ENCODE measurements at regions of chr1 and their contacts with region 1.

Region 1: GRCh38 chr1:39061951-39062350 is 35.8 kb downstream of the NDUFS5 start:
- DNase-seq: no peak
- H3K4me3 ChIP-seq: no peak overlapping the region
- H3K27ac ChIP-seq: no peak overlapping the region
- H3K4me1 ChIP-seq: no peaks in the 10 kb centered on the region
- H3K27me3 ChIP-seq: no peaks in the 10 kb centered on the region
- CTCF ChIP-seq: no peak

Region 2: GRCh38 chr1:38929476-38929875 is 132.5 kb before region 1 on chr1:
- CTCF ChIA-PET with region 1: no interaction called
- POLR2A ChIA-PET with region 1: interaction called, 12 read pairs
- intact Hi-C with region 1: no loop called
- DNase-seq: no peak
- H3K4me3 ChIP-seq: no peak overlapping the region
- H3K27ac ChIP-seq: no peak overlapping the region
- H3K4me1 ChIP-seq: no peaks in the 10 kb centered on the region
- H3K27me3 ChIP-seq: no peaks in the 10 kb centered on the region
- CTCF ChIP-seq: no peak

Region 3: DNA sequence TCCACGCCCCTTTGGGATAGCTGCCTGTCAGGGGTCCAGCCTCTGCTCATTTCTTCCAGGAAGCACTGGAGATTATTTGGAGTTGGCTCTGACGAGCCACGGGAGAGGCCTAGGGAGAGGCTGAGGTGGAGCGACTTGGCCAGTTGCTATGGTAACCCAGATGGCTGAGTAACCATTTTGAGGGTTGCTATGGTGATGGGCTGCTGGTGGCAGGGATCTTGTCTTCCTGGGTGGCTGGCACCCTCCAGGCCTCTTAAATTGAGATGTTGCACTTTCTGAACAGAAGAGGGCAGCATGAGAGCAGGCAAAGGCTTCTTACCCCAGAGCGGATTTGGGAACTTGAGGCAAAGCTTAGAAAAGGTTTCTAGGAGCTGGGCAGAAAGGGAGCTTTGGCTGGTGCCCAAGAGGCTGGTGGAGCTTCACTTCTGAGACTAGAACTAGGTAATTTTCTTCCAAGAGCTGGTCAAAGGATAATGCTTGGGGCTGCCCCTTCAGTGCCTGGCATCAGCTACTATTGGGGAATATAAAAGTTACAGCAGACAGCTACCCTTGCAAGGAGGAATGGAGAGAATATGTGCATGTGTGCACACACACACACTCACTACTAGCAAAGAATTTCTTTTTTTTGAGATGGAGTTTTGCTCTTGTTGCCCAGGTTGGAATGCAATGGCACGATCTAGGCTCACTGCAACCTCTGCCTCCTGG is 36.7 kb after region 1 on chr1:
- CTCF ChIA-PET with region 1: no interaction called
- POLR2A ChIA-PET with region 1: no interaction called
- intact Hi-C with region 1: no loop called
- DNase-seq: peak; percentile 96
- H3K4me3 ChIP-seq: no peak overlapping the region
- H3K27ac ChIP-seq: no peak overlapping the region
- H3K4me1 ChIP-seq: peaks cover 14% of the 10 kb centered on the region
- H3K27me3 ChIP-seq: no peaks in the 10 kb centered on the region
- CTCF ChIP-seq: peak; percentile 83